ENCODE measurements at regions of chr17 and their contacts with region 1.

Region 1: DNA sequence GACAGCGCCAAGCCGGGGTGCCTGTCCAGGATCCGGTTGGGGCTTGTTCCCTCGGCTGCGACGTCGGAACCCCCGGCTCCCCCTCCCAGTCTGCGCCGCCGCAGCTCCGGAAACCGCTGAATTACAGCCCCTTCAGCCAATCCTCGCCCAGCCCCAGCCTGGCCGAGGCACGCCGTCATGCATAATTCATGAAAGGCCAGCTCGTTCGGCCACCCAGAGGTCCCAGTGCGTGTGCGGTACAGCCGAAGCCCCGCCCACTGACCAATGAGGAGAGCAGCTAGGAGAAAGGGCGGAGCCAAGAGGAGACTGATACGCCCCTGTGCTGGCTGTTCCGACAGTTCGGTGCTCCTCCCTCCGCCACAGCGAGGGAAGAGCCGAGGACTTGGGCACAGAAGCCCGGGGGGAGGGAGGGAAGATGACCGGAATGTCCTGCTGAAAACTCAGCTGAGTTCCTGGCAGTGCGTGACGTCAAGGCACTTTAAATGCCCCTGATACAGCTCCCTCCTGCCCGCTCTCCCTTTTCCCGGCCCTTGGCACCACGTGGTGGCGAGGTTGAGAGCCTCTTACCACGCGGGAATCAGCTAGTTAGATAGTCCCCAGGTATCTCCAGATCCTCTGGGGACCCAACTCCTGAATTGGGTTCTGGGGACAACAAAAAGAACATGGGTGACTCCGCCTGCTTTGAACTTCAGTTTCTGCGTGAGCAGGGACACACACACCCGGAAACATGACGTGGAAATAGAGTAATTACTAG is at the start of gene STAT3:
- DNase-seq: peak; percentile 95
- ATAC-seq: peak; percentile 95
- H3K4me3 ChIP-seq: peak within 1 kb of the TSS; percentile 66 to 93
- H3K27ac ChIP-seq: peak within 1 kb of the TSS; percentile 95
- H3K4me1 ChIP-seq: peaks cover 20% of the 10 kb centered on the region
- H3K27me3 ChIP-seq: no peaks in the 10 kb centered on the region
- CTCF ChIP-seq: no peak
- total RNA-seq, gene STAT3: 287 TPM

Region 2: DNA sequence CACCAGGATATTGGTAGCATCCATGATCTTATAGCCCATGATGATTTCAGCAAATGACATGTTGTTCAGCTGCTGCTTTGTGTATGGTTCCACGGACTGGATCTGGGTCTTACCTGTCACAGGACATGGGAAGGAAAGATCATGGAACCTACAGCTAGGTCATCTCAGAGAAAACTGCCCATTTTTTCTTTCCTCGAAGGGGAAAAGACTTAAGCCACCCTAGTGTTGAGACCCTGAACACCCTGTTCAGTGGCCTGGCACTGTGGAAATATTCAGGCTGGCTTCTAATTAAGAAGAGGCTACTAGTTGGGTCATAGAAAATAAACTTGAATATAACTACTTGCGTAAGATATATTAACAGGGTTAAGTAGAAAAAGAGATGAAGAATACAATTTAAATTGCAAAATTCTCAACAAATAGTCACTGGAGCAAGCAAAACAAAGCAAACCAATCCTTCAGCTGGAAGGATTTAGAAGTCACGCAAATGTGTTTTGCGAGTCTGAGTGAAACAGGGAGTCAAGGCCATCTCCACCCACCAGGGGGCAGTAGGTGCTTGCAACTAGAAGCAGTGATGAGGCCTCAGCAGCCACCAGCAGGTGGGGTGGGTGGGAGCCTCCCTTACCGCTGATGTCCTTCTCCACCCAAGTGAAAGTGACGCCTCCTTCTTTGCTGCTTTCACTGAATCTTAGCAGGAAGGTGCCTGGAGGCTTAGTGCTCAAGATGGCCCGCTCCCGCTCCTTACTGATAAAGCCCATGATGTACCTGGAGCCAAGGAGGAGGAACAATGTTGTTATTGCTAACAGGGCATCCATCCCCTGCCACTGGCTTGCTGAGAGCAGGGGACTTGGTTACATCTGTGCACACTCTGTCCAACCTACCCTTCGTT is 65.9 kb before region 1 on chr17:
- CTCF ChIA-PET with region 1: no interaction called
- POLR2A ChIA-PET with region 1: no interaction called
- in situ Hi-C with region 1: no loop called
- intact Hi-C with region 1: loop called (anchors 10 kb)
- DNase-seq: peak; percentile 82
- ATAC-seq: peak; percentile 79
- H3K4me3 ChIP-seq: no peak overlapping the region
- H3K27ac ChIP-seq: peak overlapping the region; percentile 98
- H3K4me1 ChIP-seq: peaks cover 45% of the 10 kb centered on the region
- H3K27me3 ChIP-seq: no peaks in the 10 kb centered on the region
- CTCF ChIP-seq: peak; percentile 88

Region 3: DNA sequence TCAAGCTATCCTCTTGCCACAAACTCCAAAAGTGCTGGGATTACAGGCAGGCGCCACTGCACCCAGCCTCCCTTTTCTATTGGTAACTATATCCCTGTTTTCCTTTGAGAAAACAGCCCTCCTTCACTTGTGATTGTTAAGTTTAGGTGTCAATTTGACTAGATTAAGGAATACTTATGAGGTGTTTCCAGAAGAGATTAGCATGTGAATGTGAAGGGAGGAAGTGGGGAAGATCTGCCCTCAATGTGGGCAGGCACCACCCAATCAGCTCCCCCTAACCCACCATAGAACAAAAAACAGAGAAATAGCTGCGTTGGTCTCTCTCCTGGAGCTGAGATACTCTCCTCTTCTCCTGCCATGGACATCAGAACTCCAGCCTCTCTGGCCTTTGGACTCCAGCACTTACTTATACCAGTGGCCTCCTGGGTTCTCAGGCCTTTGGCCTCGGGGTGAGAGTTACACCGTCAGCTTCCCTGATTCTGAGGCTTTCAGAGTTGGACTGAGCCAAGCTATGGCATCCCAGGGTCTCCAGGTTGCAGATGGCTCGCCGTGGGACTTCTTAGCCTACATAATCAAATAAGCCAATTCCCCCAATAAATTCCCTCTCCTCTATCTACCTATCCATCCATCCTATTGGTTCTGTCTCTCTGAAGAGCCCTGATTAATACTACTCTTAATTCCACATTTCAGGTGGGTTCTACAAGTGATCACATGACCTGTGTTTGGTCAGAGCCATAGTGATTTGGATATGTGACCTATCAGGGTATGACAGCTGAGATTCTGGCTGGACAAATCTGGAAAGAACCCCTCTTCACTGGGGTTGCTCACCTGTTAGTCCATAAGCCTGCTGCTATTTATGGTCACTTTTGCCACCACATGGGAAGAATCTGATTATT is 11.6 kb after region 1 on chr17:
- CTCF ChIA-PET with region 1: no interaction called
- POLR2A ChIA-PET with region 1: interaction called, 13 read pairs
- in situ Hi-C with region 1: no loop called
- intact Hi-C with region 1: no loop called
- DNase-seq: no peak
- ATAC-seq: peak; percentile 35
- H3K4me3 ChIP-seq: no peak overlapping the region
- H3K27ac ChIP-seq: peak overlapping the region; percentile 84
- H3K4me1 ChIP-seq: peaks cover 45% of the 10 kb centered on the region
- H3K27me3 ChIP-seq: no peaks in the 10 kb centered on the region
- CTCF ChIP-seq: no peak

Region 4: DNA sequence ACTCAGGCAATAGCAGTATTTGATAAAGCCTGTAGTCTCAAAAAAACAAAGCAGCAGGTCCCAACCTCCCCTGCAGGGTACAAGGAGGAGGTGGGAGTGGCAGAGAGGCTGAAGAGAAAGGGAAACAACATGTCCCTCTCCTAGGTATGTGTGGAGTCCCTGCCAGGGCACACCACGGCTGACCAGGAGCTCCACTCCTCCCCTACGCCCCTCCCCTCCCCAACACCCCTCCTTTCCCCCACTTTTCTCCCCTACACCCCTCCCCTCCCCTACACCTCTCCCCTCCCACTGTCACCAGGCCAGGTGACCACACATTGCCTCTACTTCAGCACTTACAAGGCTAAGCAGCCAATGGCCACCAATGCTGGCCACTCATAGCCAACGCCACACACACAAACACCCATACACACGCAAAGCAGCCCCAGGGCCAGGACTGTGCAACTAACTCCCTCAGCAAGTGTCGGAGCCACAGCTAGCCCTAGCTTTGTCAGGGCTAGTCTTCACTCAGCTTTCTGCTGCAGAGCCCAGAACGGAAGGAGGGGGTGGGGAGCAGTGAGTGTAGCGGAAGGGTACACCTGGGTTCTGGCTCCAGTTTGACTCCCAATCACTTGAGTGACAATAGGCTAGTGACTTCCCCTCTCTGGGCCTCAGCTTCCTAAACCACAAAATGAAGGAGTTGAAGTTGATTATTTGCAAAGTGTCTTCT is 26.3 kb after region 1 on chr17:
- CTCF ChIA-PET with region 1: no interaction called
- POLR2A ChIA-PET with region 1: no interaction called
- in situ Hi-C with region 1: no loop called
- intact Hi-C with region 1: no loop called
- DNase-seq: no peak
- ATAC-seq: no peak
- H3K4me3 ChIP-seq: no peak overlapping the region
- H3K27ac ChIP-seq: no peak overlapping the region
- H3K4me1 ChIP-seq: peaks cover 36% of the 10 kb centered on the region
- H3K27me3 ChIP-seq: no peaks in the 10 kb centered on the region
- CTCF ChIP-seq: no peak